ENCODE measurements at regions of chr14 and their contacts with region 1.

Region 1: DNA sequence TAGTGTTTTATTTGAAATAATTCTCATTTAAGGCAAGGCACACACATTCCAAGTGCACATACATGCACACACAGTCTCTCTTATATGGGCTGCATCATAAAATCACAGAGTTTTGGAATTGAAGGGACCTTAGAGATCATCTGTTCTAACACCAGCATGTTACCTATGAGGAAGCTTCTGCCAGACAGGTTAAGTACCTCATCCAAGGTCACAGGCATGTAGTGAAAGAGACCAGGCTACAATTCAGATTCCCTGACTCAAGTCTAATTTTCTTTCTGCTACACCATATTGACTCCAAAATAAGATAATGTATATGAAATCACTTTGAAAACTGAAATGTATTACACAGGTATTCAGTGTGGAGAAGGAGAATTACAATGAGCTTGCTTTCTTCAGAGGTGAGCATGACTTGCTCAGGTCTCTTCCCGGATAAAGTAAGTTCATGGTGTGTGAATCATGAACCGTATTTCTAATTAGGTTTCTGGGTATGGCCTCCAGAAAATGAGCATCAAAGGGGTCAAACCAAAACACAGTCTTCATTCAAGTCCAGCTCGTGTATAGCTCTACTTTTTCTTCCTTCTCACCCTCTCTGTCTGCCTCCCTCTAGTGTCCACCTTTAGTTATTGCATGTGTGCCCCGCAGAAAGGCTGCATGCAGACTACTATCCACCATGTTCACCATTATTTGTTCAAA is 411.9 kb downstream of the FUT8 start:
- DNase-seq: peak; percentile 18 to 46 (median 43)
- H3K4me3 ChIP-seq: no peak overlapping the region
- H3K4me3 Mint-ChIP-seq: no peak overlapping the region
- H3K27ac ChIP-seq: no peak overlapping the region
- H3K27ac Mint-ChIP-seq: no peak overlapping the region
- H3K4me1 ChIP-seq: no peaks in the 10 kb centered on the region
- H3K4me1 Mint-ChIP-seq: no peaks in the 10 kb centered on the region
- H3K27me3 ChIP-seq: no peaks in the 10 kb centered on the region
- H3K27me3 Mint-ChIP-seq: peaks cover 0 to 5% (median 2%) of the 10 kb centered on the region in 3 donors
- CTCF ChIP-seq: peak; percentile 96

Region 2: GRCh38 chr14:65164068-65164824 is 660.2 kb before region 1 on chr14:
- intact Hi-C with region 1: loop called (anchors 2 to 5 kb)
- DNase-seq: peak; percentile 19 to 50 (median 42)
- H3K4me3 ChIP-seq: no peak overlapping the region
- H3K4me3 Mint-ChIP-seq: no peak overlapping the region
- H3K27ac ChIP-seq: no peak overlapping the region
- H3K27ac Mint-ChIP-seq: peak overlapping the region in 1 of 7 donors; percentile 27
- H3K4me1 ChIP-seq: peaks cover 0 to 7% of the 10 kb centered on the region in 2 donors
- H3K4me1 Mint-ChIP-seq: peaks cover 7% of the 10 kb centered on the region
- H3K27me3 ChIP-seq: no peaks in the 10 kb centered on the region
- H3K27me3 Mint-ChIP-seq: no peaks in the 10 kb centered on the region
- CTCF ChIP-seq: peak; percentile 88

Region 3: GRCh38 chr14:65222440-65222858 is 602.0 kb before region 1 on chr14:
- intact Hi-C with region 1: loop called in 1 of 2 experiments (anchors 10 kb)
- DNase-seq: peak; percentile 21 to 57 (median 52)
- H3K4me3 ChIP-seq: no peak overlapping the region
- H3K4me3 Mint-ChIP-seq: no peak overlapping the region
- H3K27ac ChIP-seq: no peak overlapping the region
- H3K27ac Mint-ChIP-seq: peak overlapping the region in 1 of 7 donors; percentile 50
- H3K4me1 ChIP-seq: no peaks in the 10 kb centered on the region
- H3K4me1 Mint-ChIP-seq: peaks cover 12% of the 10 kb centered on the region
- H3K27me3 ChIP-seq: no peaks in the 10 kb centered on the region
- H3K27me3 Mint-ChIP-seq: peaks cover 0 to 4% (median 0%) of the 10 kb centered on the region in 3 donors
- CTCF ChIP-seq: peak; percentile 87

Region 4: GRCh38 chr14:65412032-65412846 is 412.2 kb before region 1 on chr14 and contains the start of gene FUT8:
- intact Hi-C with region 1: loop called in 1 of 2 experiments (anchors 10 kb)
- DNase-seq: peak; percentile 62 to 73 (median 72)
- H3K4me3 ChIP-seq: peak within 1 kb of the TSS; percentile 63 to 91 (median 82)
- H3K4me3 Mint-ChIP-seq: peak within 1 kb of the TSS; percentile 97 to 98
- H3K27ac ChIP-seq: peak within 1 kb of the TSS; percentile 18 to 60
- H3K27ac Mint-ChIP-seq: peak within 1 kb of the TSS; percentile 60 to 87 (median 84)
- H3K4me1 ChIP-seq: peaks cover 7 to 21% of the 10 kb centered on the region in 2 donors
- H3K4me1 Mint-ChIP-seq: peaks cover 13% of the 10 kb centered on the region
- H3K27me3 ChIP-seq: peaks cover 0 to 12% of the 10 kb centered on the region in 2 donors
- H3K27me3 Mint-ChIP-seq: peaks cover 1 to 9% (median 7%) of the 10 kb centered on the region in 3 donors
- CTCF ChIP-seq: peak; percentile 45
- polyA plus RNA-seq, gene FUT8: 1.6 to 5.1 (median 5.0) TPM

Region 5: DNA sequence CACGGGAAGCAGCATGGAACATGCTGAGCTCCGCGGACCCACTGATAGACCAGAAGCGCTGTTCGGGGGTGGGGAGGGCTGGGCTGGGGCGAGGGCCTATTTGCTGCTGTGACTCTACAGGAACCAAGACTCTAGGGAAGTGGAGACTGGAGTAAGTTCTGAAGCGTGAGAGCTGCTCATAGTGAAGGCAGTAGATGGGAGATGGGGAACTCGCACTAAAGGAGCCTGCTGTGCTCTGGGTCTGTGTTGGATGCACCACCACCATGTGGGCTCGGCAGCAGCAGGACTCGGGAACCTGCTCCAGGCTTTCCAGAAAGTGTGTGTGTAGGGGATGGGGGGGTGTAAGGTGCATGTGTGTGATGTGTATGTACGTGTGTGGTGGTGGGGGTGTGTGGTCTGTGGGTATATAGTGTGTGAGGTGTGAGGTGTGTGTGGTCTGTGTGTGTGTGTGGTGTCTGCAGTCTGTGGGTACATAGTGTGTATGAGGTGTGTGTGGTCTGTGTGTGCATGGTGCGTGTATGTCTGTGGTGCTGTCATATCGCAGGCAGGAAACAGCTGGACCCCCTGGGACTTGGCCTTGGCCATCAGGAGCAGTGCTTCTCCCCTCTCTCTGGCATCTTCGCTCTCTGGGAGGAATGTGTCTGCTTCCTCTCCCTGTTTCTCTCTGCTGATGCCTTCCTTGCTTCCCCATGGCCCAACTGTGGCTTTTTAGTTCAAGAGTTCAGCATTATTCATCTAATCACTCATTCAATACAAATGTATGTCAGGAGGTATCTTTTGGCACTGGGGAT is 33.0 kb before region 1 on chr14:
- intact Hi-C with region 1: no loop called
- DNase-seq: no peak
- H3K4me3 ChIP-seq: no peak overlapping the region
- H3K4me3 Mint-ChIP-seq: no peak overlapping the region
- H3K27ac ChIP-seq: no peak overlapping the region
- H3K27ac Mint-ChIP-seq: no peak overlapping the region
- H3K4me1 ChIP-seq: no peaks in the 10 kb centered on the region
- H3K4me1 Mint-ChIP-seq: no peaks in the 10 kb centered on the region
- H3K27me3 ChIP-seq: no peaks in the 10 kb centered on the region
- H3K27me3 Mint-ChIP-seq: peaks cover 0 to 3% (median 0%) of the 10 kb centered on the region in 3 donors
- CTCF ChIP-seq: no peak

Region 6: GRCh38 chr14:65915125-65915524 is 90.7 kb after region 1 on chr14:
- intact Hi-C with region 1: no loop called
- DNase-seq: no peak
- H3K4me3 ChIP-seq: no peak overlapping the region
- H3K4me3 Mint-ChIP-seq: no peak overlapping the region
- H3K27ac ChIP-seq: no peak overlapping the region
- H3K27ac Mint-ChIP-seq: no peak overlapping the region
- H3K4me1 ChIP-seq: no peaks in the 10 kb centered on the region
- H3K4me1 Mint-ChIP-seq: no peaks in the 10 kb centered on the region
- H3K27me3 ChIP-seq: no peaks in the 10 kb centered on the region
- H3K27me3 Mint-ChIP-seq: peaks cover 0 to 2% (median 0%) of the 10 kb centered on the region in 3 donors
- CTCF ChIP-seq: no peak

Measured in CD14-positive monocyte (primary cell).